ENCODE measurements at regions of chr17 and their contacts with region 1.

Region 1: DNA sequence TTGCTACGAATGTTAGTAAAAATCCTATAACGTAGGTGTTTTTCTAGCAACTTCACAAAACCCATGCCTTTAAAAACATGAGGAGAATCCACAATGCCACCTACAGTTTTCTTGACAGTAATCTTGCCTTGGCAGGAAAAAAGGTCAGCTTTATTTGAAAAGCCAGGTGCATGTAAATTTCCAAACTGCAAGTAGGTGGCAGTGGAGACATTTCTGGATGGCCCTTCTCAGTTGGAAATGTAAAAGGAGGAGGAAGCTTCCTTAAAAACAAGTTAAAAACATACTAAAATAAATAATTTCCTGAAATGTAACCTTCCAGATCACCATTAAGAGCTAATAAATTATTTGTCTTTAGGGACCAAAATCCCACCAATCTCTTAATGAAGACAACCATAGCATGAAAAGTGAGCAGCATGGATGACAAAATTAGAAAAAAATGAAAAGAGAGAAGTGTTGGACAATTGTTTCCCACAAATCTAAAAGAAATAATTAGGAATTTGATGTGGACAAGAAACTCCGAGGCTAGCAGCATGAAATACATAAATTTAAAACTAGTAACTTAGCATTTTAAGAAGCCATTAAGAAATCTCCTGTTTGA is 152.2 kb downstream of the SNX11 start:
- DNase-seq: no peak
- H3K4me3 ChIP-seq: no peak overlapping the region
- H3K27me3 ChIP-seq: peaks cover 2% of the 10 kb centered on the region; the same call in 1 of the 2 replicates
- CTCF ChIP-seq: peak; percentile 57

Region 2: DNA sequence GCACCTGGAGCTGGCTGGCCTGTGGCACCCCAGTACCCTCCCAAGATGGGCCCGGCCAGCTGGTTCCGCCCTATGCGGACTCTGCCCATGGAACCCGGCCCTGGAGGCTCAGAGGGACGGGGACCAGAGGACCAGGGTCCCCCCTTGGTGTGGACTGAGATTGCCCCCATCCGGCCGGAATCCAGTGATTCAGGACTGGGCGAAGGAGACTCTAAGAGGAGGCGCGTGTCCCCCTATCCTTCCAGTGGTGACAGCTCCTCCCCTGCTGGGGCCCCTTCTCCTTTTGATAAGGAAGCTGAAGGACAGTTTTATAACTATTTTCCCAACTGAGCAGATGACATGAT is 514.8 kb before region 1 on chr17:
- CTCF ChIA-PET with region 1: no interaction called
- POLR2A ChIA-PET with region 1: no interaction called
- DNase-seq: no peak
- H3K4me3 ChIP-seq: no peak overlapping the region
- H3K27me3 ChIP-seq: peaks cover 28% of the 10 kb centered on the region
- CTCF ChIP-seq: no peak

Region 3: GRCh38 chr17:48215583-48216139 is 44.1 kb before region 1 on chr17:
- CTCF ChIA-PET with region 1: interaction called, 13 read pairs
- POLR2A ChIA-PET with region 1: no interaction called
- DNase-seq: no peak
- H3K4me3 ChIP-seq: no peak overlapping the region
- H3K27me3 ChIP-seq: peaks cover 20% of the 10 kb centered on the region
- CTCF ChIP-seq: peak; percentile 65

Region 4: DNA sequence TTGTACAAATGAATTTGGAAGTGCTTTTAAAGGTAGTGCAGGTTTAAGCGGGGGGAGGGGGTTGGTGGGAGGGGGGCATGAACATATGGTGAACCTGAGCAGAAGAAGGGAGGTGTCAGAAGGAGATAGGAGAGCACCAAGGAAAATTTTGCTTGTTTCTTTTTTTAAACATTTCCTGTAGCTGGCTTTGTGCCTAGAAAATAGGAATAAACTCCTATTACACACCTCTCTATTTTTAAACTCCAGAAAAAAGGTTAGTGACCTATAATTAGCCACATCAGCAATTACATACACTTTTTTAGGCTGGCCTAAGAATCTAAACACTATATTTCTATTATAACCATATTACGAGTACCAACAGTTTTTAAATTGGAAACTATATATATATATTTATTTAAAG is 11.1 kb after region 1 on chr17:
- CTCF ChIA-PET with region 1: interaction called, 15 read pairs
- POLR2A ChIA-PET with region 1: no interaction called
- DNase-seq: no peak
- H3K4me3 ChIP-seq: no peak overlapping the region
- H3K27me3 ChIP-seq: peaks cover 7% of the 10 kb centered on the region
- CTCF ChIP-seq: no peak

Region 5: DNA sequence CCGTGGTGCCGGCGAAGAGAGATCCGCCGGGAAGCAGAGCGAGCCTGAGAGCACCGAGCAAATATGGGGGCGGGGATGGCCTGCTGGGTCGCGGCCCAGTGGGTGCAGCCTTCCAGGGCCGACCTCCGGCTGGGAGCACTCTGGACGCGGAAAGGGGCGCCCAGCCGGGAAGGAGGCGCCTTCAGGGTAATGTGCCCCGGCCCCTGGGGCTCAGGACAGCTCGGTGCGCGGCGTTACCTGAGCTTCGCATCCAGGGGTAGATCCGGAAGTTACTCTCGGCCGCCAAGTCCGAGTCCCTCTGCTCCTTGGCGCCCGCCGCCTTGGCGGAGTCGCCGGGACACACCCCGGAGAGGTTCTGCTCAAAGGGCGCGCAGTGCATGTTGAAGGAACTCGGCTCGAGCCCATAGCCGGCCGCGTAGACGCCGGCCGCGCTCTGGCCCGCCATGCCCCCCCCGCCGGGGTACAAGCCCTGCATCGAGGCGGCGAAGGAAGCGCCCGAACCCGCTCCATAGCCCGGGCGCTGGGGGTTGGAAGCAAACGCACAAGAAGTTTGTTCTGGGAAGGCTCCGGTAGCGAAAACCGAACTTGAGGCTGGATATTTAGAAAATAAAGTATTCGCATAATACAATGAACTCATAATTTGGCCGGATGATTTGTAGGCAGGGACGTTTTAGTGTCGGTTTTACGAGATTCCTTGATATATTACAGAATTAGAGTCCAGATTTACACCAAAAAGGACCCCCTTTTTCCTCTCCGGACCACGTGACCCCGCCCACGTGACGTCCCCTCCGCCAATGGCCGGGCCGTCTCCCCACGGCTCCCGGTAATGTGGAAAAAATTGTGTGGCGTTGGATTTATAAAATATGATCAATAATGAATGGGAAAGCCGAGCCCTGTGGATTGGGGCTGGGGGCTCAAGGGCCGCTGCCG is 350.8 kb after region 1 on chr17 and contains the start of gene HOXB7:
- CTCF ChIA-PET with region 1: no interaction called
- POLR2A ChIA-PET with region 1: interaction called, 10 read pairs
- DNase-seq: no peak
- H3K4me3 ChIP-seq: peak within 1 kb of the TSS; percentile 6
- H3K27me3 ChIP-seq: peaks cover 84% of the 10 kb centered on the region
- CTCF ChIP-seq: no peak
- polyA plus RNA-seq, gene HOXB7: not detected in 2 replicates